PC-9 (cell line): ENCODE measurements at regions of chr4 and their contacts with region 1.

Region 1: DNA sequence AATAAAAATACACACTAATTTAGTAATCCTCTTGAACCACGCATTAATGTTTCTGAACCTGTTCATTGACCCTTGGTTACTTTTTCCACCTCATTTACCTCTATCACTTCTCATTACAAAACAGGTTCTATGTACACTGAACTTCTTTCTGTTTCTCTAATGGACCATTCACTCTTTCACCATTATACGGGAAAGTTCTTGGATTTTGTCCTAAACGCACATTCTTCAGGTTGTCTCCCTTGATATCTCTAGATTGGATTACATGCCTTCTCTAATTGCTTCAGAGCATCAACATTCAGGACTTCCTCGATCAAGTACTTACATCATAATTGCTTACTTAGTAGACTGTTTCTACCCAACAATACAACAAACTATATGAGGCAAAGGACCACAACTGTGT is 359.4 kb upstream of the FSTL5 start:
- DNase-seq: peak in 1 of 2 experiments; percentile 36
- H3K4me3 ChIP-seq: no peak overlapping the region
- H3K27ac ChIP-seq: no peak overlapping the region
- H3K4me1 ChIP-seq: no peaks in the 10 kb centered on the region
- H3K27me3 ChIP-seq: no peaks in the 10 kb centered on the region
- CTCF ChIP-seq: no peak

Region 2: DNA sequence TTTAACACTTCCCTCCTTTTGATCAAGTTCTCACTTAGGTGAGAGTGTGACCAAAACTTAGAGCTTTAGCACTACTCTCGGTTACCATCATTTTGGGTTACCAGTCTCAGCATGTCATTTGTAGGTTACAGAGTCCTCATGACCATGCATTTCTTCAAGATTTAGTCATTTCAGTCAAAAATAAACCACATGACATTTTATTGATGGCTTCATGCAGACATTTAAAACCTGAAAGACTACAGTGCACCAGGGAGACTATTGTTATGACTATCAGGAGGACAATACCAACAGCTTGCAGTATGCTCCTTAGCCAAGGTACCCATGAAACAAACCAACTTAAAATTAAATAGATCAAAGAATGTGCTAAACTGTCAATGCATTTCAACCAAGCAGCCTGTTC is 138.7 kb after region 1 on chr4:
- CTCF ChIA-PET with region 1: no interaction called
- POLR2A ChIA-PET with region 1: no interaction called
- intact Hi-C with region 1: no loop called
- DNase-seq: no peak
- H3K4me3 ChIP-seq: no peak overlapping the region
- H3K27ac ChIP-seq: no peak overlapping the region
- H3K4me1 ChIP-seq: no peaks in the 10 kb centered on the region
- H3K27me3 ChIP-seq: no peaks in the 10 kb centered on the region
- CTCF ChIP-seq: no peak

Region 3: GRCh38 chr4:162715401-162715800 is 192.2 kb after region 1 on chr4:
- CTCF ChIA-PET with region 1: no interaction called
- POLR2A ChIA-PET with region 1: no interaction called
- intact Hi-C with region 1: no loop called
- DNase-seq: no peak
- H3K4me3 ChIP-seq: no peak overlapping the region
- H3K27ac ChIP-seq: no peak overlapping the region
- H3K4me1 ChIP-seq: no peaks in the 10 kb centered on the region
- H3K27me3 ChIP-seq: no peaks in the 10 kb centered on the region
- CTCF ChIP-seq: no peak

Region 4: DNA sequence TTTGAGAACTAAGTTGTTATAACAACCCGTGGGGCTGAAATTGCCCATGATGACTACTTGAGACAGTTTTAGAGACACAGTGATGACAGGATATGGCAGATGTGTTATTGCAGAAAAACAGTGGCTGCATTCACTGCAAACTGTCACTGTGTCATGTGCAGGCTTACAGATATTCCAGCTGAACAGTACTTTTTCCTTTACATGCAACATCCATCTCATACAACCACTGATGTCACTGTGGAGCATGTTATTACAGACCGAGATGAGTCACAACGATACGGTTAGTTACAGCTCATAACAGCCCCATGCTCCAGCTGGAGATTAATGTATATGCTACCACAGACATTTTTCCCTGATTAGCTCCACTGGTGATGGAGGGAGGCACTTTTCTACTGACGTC is 1178.7 kb after region 1 on chr4:
- CTCF ChIA-PET with region 1: no interaction called
- POLR2A ChIA-PET with region 1: interaction called, 35 read pairs
- intact Hi-C with region 1: no loop called
- DNase-seq: no peak
- H3K4me3 ChIP-seq: no peak overlapping the region
- H3K27ac ChIP-seq: no peak overlapping the region
- H3K4me1 ChIP-seq: no peaks in the 10 kb centered on the region
- H3K27me3 ChIP-seq: no peaks in the 10 kb centered on the region
- CTCF ChIP-seq: no peak